ENCODE measurements at regions of chr2 and their contacts with region 1.

Region 1: DNA sequence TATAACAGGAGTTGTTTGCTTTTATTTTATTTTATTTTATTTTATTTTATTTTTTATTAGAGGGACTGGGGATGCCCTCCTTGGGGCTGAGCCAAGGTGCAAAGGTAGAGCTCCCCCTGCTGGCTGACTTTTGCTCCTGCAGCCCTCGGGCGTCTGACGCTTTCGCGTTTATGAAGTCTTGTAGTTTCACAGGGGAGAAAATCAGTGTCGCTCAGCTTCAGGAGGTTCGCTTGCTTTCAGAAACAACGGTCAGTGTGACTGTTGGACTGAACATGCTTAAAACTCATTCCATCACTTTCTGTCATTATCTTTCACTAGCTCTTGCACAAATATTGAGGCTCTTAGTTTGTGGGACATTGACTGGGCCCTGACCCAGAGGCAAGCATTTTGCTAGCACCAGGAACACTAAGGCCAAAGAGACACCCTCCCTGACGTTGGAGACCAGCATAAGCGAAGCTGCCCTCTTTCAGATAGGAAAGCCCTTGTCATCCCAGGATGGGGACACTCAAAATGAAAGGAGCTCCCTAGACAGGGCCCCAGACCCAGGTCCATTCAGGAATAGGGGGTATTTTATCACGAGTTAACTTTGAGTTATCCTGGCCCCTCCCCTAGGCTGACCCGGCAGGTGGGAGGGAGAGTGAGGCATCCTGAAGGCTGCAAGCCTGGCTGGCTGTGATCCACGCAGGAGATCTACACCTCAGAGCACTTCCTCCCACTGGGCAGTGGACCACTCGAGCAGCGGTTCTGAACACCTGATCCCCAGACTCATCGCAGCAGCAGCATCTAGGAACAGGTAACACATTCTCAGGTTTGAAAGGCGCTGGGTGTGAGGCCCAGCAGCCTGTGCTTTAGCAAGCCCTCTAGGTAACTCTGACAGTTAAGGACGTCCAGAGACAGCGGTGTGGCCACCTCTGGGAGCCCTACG is 34.4 kb downstream of the LGALSL start:
- DNase-seq: peak; percentile 76
- CTCF ChIP-seq: peak; percentile 97

Region 2: DNA sequence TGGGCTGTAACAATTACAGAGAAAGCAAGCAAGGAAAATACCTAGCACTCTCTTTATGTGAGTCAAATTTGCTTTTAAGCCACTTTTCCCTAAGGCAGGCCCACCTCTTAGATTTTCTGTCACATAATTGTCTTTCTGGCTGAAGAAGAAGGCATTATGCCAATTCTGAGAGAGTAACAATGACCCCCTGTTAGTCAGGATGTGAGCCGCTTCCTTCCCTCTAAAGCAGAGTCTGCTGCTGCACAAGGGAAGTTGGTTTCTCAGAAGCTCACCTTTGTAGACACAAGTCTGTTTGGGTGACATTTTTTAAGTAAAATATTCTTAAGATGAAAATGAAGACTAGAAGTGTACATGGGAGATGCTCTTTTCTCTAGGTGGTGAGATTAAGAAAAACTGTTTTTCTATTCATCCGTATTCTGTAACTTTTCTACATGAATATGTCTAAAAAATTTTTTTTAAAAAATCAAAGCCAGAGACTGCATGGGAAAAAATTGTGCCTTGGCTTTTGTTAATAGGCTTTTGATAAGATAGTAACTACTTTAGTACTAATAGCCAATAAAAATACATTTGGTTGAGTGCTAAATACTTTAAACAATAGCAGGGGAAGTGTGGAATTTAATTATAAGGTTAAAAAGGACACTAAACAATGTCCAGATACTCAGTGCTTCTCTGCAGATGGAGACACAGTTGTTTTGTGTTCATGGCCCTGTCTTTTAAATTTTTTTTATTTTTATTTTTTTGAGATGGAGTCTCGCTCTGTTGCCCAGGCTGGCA is 435.7 kb before region 1 on chr2:
- CTCF ChIA-PET with region 1: interaction called, 39 read pairs
- POLR2A ChIA-PET with region 1: no interaction called
- DNase-seq: no peak
- CTCF ChIP-seq: no peak

Region 3: DNA sequence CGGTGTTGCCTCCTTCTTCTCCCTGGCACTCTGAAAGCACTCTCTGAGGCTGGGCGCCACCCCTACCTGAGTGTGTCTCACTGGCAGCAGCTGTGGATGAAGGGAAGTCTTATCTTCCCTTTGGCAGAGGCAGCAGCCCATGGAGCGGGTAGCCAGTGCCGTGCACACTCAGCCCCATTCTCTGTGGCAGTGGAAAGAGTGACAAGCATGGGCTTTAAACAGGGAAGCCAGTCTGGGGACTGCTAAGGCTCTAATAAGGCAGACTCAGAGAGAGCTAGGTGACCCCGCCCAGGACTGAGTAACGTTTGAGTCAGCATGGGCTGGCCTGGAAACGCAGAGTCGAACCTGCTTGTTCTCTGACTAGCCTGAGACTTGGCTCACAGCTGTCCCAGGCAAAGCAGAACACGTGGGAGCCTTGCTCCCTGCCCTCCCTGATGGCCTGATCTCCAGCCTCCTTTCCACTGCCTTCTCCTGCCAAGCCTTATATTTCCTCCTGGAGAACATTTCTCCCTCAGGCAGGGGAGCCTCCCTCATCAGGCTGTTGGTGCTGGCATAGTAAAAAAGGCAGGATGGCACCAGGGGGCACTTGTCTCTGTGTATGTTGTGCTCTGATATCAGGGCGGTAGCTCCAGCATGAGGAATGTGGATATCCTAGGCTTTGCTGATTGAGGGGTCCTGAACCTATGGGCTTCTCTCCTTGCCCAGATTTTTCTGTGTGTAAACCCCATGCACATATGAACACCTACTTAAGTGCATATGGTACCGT is 128.2 kb before region 1 on chr2:
- CTCF ChIA-PET with region 1: interaction called, 16 read pairs
- POLR2A ChIA-PET with region 1: no interaction called
- DNase-seq: peak; percentile 54
- CTCF ChIP-seq: no peak

Region 4: GRCh38 chr2:64439194-64439593 is 49.1 kb before region 1 on chr2:
- CTCF ChIA-PET with region 1: interaction called, 11 read pairs
- POLR2A ChIA-PET with region 1: no interaction called
- DNase-seq: no peak
- CTCF ChIP-seq: no peak

Region 5: GRCh38 chr2:64461271-64462058 is 26.8 kb before region 1 on chr2:
- CTCF ChIA-PET with region 1: interaction called, 21 read pairs
- POLR2A ChIA-PET with region 1: no interaction called
- DNase-seq: no peak
- CTCF ChIP-seq: no peak

Region 6: DNA sequence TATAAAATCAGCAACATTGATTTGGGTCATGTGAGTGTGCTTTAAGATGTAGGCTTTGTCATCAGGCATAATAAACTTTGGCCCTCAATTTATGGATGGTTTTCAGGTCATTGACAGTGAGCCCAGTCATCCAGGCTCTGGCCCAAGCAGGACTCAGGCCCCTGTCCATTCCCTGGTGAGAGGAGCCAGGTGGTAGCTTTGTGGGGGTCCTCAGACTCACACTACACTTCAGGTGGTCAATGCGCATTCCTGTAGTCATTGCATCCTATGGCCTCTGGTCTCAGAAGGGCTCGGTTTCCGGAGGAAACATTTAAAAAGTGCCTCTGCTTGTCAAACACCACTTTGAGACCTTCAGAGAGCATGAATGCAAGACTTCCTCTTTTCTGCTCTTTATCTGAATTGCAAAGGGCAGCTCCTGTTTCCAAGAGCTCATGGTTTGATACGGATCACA is 14.2 kb before region 1 on chr2:
- CTCF ChIA-PET with region 1: interaction called, 98 read pairs
- POLR2A ChIA-PET with region 1: no interaction called
- DNase-seq: peak; percentile 26
- CTCF ChIP-seq: no peak

Region 7: DNA sequence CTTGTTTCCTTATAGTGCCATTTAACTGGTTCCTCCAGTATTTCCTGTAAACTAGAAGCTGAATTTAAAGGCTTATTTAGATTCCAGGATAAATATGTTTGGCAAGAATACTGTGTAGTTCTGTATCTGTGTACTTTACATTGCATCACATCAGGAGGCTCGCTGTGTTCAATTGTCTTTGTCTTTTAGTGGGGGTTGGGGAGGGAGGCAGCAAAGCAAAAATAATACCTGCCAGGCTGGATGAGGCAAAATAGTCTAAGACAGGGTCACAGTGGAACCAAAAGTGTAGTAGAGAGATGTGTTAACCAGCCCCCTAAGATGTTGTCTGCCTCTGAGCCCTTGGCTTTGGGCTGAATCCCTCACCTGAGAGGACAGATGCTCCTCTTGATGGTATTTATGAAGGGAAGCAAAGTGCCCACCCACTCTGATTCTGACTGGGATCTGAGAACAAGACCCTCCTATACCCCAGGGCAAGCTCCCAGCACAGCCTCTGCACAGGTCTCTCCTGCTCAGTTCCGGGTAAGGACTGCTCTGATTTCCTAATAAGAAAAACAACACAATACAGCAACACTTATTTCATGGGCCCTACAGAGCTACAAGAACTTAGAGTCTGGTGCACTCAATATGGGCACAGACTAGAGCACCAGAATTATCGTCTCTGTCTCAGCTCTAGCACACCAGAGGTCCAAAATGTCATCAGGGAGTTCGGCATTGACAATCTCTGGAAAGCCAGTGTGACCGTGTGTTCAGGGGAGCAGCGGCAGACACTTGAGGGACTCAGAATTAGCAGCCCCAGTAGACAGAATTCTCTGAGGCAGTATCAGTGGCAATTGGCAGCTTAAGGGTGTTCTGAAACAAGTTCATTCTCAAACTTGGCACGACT is 28.6 kb after region 1 on chr2:
- CTCF ChIA-PET with region 1: interaction called, 36 read pairs
- POLR2A ChIA-PET with region 1: no interaction called
- DNase-seq: no peak
- CTCF ChIP-seq: no peak

Region 8: DNA sequence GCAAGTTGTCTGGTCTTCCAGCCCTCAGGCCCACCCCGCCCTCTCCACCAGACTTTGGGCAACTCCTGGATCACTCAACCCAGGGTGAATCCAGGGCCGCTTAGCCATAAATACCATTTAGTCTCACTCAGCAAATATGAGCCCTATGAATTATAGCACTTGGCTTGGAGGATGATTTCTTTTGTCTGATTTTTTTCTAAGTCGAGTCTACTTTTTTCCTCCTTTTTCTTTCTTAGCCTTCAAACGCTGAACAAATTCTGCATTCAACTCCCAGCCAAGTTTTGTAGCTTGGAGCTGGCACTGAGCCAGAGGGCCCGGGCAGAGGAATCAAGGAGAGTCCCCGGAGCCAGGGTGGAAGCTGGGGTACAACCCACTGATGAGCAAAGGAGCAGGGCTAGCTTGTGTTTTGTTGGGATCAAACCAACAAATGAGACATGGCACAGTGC is 116.7 kb after region 1 on chr2:
- CTCF ChIA-PET with region 1: no interaction called
- POLR2A ChIA-PET with region 1: no interaction called
- DNase-seq: no peak
- CTCF ChIP-seq: no peak